H1 (cell line): ENCODE measurements at regions of chr7 and their contacts with region 1.

Region 1: GRCh38 chr7:117993377-117994003 is 120.2 kb upstream of the CTTNBP2 start:
- DNase-seq: peak; percentile 36 to 72
- H3K4me3 ChIP-seq: no peak overlapping the region
- H3K27ac ChIP-seq: no peak overlapping the region
- H3K4me1 ChIP-seq: peaks cover 0 to 2% (median 0%) of the 10 kb centered on the region in 4 experiments; a peak in 2 of 7 replicates
- H3K27me3 ChIP-seq: no peaks in the 10 kb centered on the region
- CTCF ChIP-seq: peak; percentile 42 to 89 (median 87)
- EP300 ChIP-seq: no peak
- POLR2A ChIP-seq: no peak
- RAD21 ChIP-seq: peak; percentile 70 to 77

Region 2: DNA sequence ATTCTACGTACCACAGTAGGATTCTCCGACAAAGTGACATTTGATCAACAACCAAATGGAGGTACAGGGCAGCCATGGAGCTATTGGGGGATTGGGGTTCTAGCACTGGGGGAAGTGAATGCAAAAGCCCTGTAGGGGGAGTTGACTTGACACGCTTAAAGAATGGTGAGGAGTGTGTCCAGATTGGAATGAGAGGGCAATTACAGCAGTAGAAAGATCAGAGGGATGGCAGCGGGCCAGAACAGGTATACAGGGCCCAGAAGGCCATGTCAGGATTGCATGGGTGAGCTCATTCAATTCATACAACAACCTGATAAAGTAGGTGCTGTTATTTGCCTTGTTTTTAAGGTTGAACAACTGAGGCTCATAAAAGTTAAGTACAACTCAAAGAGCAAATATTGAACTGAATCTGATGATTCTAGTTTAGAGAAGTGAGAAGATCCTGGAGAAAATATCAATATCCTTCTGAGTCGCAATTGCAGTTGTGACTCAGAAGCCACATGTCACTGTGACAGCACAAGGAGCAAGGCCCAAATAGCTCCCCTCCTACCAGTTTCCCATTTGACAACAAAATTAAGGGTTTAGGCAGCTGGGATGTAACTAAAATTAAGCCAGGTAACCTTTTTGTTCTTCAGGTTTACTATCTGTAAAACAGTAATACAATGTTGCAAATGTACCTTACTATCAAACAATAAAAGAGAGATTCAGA is 92.2 kb before region 1 on chr7:
- CTCF ChIA-PET with region 1: no interaction called
- POLR2A ChIA-PET with region 1: no interaction called
- DNase-seq: no peak
- H3K4me3 ChIP-seq: no peak overlapping the region
- H3K27ac ChIP-seq: no peak overlapping the region
- H3K4me1 ChIP-seq: no peaks in the 10 kb centered on the region
- H3K27me3 ChIP-seq: no peaks in the 10 kb centered on the region
- CTCF ChIP-seq: peak in 1 of 3 experiments; percentile 14; a peak in 1 of 4 replicates
- EP300 ChIP-seq: no peak
- POLR2A ChIP-seq: no peak
- RAD21 ChIP-seq: 0 out of 4 replicates have a peak, but pooled peaks of 1 of the 2 experiments have one; percentile 6

Region 3: DNA sequence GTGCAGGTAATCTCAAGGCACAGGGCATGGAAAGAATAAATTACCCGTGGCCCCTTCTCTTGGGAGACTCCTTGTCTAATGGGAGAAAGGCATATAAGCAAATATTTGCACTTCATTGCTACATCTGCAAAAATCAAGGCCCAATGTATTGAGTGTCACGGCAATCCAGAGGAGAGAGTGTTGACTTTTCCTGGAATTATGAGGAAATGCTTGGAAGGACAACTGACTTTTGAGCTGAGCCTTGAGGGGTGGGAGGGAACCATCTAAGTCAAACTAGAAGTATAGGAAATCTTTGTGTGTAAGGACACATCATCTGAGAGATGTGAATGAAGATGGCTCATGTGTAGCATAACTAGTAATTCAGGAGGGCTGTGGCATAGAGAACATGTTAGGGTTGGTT is 55.4 kb before region 1 on chr7:
- CTCF ChIA-PET with region 1: interaction called, 10 read pairs
- POLR2A ChIA-PET with region 1: no interaction called
- DNase-seq: no peak
- H3K4me3 ChIP-seq: no peak overlapping the region
- H3K27ac ChIP-seq: no peak overlapping the region
- H3K4me1 ChIP-seq: no peaks in the 10 kb centered on the region
- H3K27me3 ChIP-seq: no peaks in the 10 kb centered on the region
- CTCF ChIP-seq: no peak
- EP300 ChIP-seq: no peak
- POLR2A ChIP-seq: no peak
- RAD21 ChIP-seq: no peak

Region 4: DNA sequence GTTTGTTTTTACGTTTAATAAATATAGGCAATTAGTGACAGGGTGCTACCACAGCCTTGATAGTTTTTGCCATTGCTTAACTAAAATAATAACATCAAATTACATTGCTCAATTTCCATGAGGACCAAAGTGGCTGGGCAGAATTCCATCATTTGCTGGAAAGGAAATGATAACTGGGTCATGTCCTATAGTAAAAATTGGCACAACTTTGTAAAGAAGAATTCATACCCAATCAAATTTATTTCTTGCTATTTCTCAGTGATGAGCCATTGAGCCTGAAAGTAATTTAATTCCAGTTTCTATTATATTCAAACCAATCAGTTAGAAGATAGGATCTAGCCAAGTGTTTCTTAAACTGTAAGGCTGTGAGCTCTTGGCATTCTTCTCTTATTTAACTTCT is 18.0 kb before region 1 on chr7:
- CTCF ChIA-PET with region 1: interaction called, 12 read pairs
- POLR2A ChIA-PET with region 1: interaction called, 3 read pairs
- DNase-seq: no peak
- H3K4me3 ChIP-seq: no peak overlapping the region
- H3K27ac ChIP-seq: no peak overlapping the region
- H3K4me1 ChIP-seq: no peaks in the 10 kb centered on the region
- H3K27me3 ChIP-seq: no peaks in the 10 kb centered on the region
- CTCF ChIP-seq: no peak
- EP300 ChIP-seq: no peak
- POLR2A ChIP-seq: no peak
- RAD21 ChIP-seq: no peak

Region 5: DNA sequence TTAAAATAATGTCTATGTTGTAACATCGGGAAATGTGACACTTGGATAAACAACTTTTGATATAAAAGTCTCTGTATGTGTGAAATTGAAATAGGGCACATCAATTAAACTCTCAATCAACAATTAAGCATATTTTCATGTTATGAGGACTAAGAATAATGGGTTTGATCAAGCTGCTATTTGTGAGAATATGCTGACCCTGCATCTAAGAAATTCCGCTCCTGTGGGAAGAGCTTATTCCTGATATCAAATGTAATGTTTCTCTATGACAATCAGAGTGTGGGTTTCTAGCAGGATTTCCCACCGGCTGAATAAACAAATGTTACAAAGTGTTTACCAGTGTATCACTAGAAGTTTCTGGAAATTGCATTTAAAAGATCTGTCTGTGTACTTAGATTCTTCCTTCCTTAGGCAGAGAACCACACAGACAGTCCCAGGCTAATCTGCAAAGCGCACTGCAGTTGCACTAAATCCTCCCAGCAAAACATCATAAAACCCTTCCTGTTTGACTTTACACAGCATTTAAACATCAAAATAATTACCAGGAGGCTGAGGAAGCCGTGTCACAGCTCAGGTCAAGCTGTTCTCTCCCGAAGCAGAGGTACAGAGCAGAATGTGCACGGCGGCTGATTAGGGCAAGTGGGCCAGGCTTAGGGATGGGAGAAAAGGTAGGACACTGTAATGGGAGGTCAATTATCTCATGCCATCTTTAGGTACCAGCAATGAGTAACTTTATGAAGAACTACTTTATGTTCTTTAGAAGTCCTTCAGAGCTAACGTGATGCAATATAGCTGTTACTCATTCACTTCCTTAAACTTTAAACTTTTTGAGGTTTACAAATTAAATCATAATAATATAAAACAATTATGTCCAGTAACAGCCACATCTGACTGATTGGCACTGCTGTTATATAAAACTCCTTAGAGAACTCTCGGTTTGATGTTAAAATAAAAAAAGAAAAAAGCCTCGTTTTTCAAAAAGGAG is 11.1 kb before region 1 on chr7:
- CTCF ChIA-PET with region 1: interaction called, 18 read pairs
- POLR2A ChIA-PET with region 1: no interaction called
- DNase-seq: no peak
- H3K4me3 ChIP-seq: no peak overlapping the region
- H3K27ac ChIP-seq: no peak overlapping the region
- H3K4me1 ChIP-seq: no peaks in the 10 kb centered on the region
- H3K27me3 ChIP-seq: no peaks in the 10 kb centered on the region
- CTCF ChIP-seq: no peak
- EP300 ChIP-seq: no peak
- POLR2A ChIP-seq: no peak
- RAD21 ChIP-seq: no peak

Region 6: GRCh38 chr7:118013252-118014010 is 19.9 kb after region 1 on chr7:
- CTCF ChIA-PET with region 1: interaction called, 13 read pairs
- POLR2A ChIA-PET with region 1: no interaction called
- DNase-seq: no peak
- H3K4me3 ChIP-seq: no peak overlapping the region
- H3K27ac ChIP-seq: no peak overlapping the region
- H3K4me1 ChIP-seq: no peaks in the 10 kb centered on the region
- H3K27me3 ChIP-seq: no peaks in the 10 kb centered on the region
- CTCF ChIP-seq: no peak
- EP300 ChIP-seq: no peak
- POLR2A ChIP-seq: no peak
- RAD21 ChIP-seq: no peak

Region 7: GRCh38 chr7:118094040-118094439 is 100.5 kb after region 1 on chr7:
- CTCF ChIA-PET with region 1: interaction called, 11 read pairs
- POLR2A ChIA-PET with region 1: no interaction called
- DNase-seq: no peak
- H3K4me3 ChIP-seq: no peak overlapping the region
- H3K27ac ChIP-seq: no peak overlapping the region
- H3K4me1 ChIP-seq: no peaks in the 10 kb centered on the region
- H3K27me3 ChIP-seq: no peaks in the 10 kb centered on the region
- CTCF ChIP-seq: no peak
- EP300 ChIP-seq: no peak
- POLR2A ChIP-seq: no peak
- RAD21 ChIP-seq: no peak